CD4-positive, alpha-beta T cell (primary cell): ENCODE measurements at regions of chr5 and their contacts with region 1.

Region 1: GRCh38 chr5:181207214-181208107 is 2.5 kb upstream of the TRIM7 start:
- DNase-seq: peak; percentile 49 to 94 (median 62)
- ATAC-seq: peak; percentile 63
- H3K4me3 ChIP-seq: peak overlapping the region; percentile 59
- H3K4me3 Mint-ChIP-seq: peak overlapping the region; percentile 95
- H3K27ac ChIP-seq: peak overlapping the region; percentile 22 to 49
- H3K27ac Mint-ChIP-seq: peak overlapping the region; percentile 99
- H3K4me1 ChIP-seq: peaks cover 39% of the 10 kb centered on the region
- H3K4me1 Mint-ChIP-seq: peaks cover 41% of the 10 kb centered on the region
- H3K27me3 ChIP-seq: peaks cover 0 to 9% of the 10 kb centered on the region in 2 experiments
- H3K27me3 Mint-ChIP-seq: peaks cover 29% of the 10 kb centered on the region
- CTCF ChIP-seq: no peak

Region 2: GRCh38 chr5:181173420-181174342 is 33.8 kb before region 1 on chr5:
- CTCF ChIA-PET with region 1: interaction called, 5 read pairs
- POLR2A ChIA-PET with region 1: interaction called, 15 read pairs
- intact Hi-C with region 1: loop called in 1 of 2 experiments (anchors 10 kb)
- DNase-seq: peak in 9 of 14 experiments; percentile 17 to 76 (median 55)
- ATAC-seq: peak; percentile 84
- H3K4me3 ChIP-seq: peak overlapping the region; percentile 25
- H3K4me3 Mint-ChIP-seq: peak overlapping the region; percentile 92
- H3K27ac ChIP-seq: no peak overlapping the region
- H3K27ac Mint-ChIP-seq: peak overlapping the region; percentile 78
- H3K4me1 ChIP-seq: peaks cover 33% of the 10 kb centered on the region
- H3K4me1 Mint-ChIP-seq: peaks cover 44% of the 10 kb centered on the region
- H3K27me3 ChIP-seq: peaks cover 21 to 45% of the 10 kb centered on the region in 2 experiments
- H3K27me3 Mint-ChIP-seq: peaks cover 44% of the 10 kb centered on the region
- CTCF ChIP-seq: peak; percentile 10

Region 3: DNA sequence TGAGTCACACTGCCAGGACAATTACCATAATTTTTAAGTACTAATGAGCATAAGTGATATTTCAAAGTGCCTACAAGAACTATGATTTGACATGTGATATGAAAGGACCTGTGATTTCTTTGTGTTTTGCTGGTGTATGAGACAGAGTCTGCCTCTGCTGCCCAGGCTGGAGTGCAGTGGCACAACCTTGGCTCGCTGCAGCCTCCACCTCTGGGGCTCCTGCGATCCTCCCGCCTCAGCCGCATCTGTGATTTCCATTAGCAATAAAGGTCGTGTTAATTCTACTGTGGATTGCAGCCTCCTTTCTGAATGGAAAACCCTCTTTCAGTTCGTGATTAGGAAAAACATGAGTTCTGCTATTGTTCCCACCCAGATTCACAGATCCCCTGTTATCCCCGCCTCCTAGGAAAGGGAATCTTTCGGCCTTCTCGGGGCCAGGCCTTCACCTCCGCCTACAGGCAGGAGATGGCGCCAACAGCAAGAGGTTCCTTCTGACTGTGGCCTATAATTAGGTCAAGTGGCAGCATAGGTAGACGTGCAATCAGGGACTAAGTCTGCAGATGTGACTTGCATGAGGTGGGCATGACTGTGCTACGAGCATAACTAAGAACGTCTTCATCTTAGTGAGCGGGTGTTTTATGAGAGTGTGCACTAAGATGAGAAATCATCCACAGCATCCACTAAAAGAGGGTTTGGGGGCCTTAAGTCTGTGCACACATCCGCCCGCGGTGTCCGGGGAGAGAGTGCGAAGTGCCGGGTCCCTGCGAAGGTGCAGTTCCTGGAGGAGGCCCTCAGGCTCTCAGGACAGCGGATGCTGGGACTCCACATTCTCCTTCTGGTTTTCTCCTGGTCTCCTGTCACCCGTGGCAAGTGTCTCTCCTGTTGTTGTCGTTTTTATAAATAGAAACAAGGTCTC is 25.6 kb before region 1 on chr5:
- CTCF ChIA-PET with region 1: interaction called, 15 read pairs
- POLR2A ChIA-PET with region 1: interaction called, 292 read pairs
- intact Hi-C with region 1: no loop called
- DNase-seq: peak; percentile 46 to 88 (median 58)
- ATAC-seq: peak; percentile 59
- H3K4me3 ChIP-seq: no peak overlapping the region
- H3K4me3 Mint-ChIP-seq: peak overlapping the region; percentile 86
- H3K27ac ChIP-seq: no peak overlapping the region
- H3K27ac Mint-ChIP-seq: peak overlapping the region; percentile 86
- H3K4me1 ChIP-seq: peaks cover 30% of the 10 kb centered on the region
- H3K4me1 Mint-ChIP-seq: peaks cover 40% of the 10 kb centered on the region
- H3K27me3 ChIP-seq: no peaks in the 10 kb centered on the region
- H3K27me3 Mint-ChIP-seq: no peaks in the 10 kb centered on the region
- CTCF ChIP-seq: peak; percentile 87

Region 4: GRCh38 chr5:181191529-181192394 is 15.7 kb before region 1 on chr5:
- CTCF ChIA-PET with region 1: interaction called, 12 read pairs
- POLR2A ChIA-PET with region 1: interaction called, 292 read pairs
- intact Hi-C with region 1: loop called (anchors 1 kb)
- DNase-seq: peak; percentile 88 to 99 (median 96)
- ATAC-seq: peak; percentile 45
- H3K4me3 ChIP-seq: peak overlapping the region; percentile 89
- H3K4me3 Mint-ChIP-seq: peak overlapping the region; percentile 99
- H3K27ac ChIP-seq: peak overlapping the region; percentile 52 to 62
- H3K27ac Mint-ChIP-seq: peak overlapping the region; percentile 99
- H3K4me1 ChIP-seq: peaks cover 46% of the 10 kb centered on the region
- H3K4me1 Mint-ChIP-seq: peaks cover 47% of the 10 kb centered on the region
- H3K27me3 ChIP-seq: no peaks in the 10 kb centered on the region
- H3K27me3 Mint-ChIP-seq: peaks cover 35% of the 10 kb centered on the region
- CTCF ChIP-seq: no peak

Region 5: GRCh38 chr5:181223058-181223728 is 15.7 kb after region 1 on chr5 and contains the start of gene TRIM41:
- CTCF ChIA-PET with region 1: interaction called, 4 read pairs
- POLR2A ChIA-PET with region 1: interaction called, 86 read pairs
- intact Hi-C with region 1: loop called (anchors 1 kb)
- DNase-seq: peak; percentile 94 to 98 (median 97)
- ATAC-seq: peak; percentile 61
- H3K4me3 ChIP-seq: peak within 1 kb of the TSS; percentile 80
- H3K4me3 Mint-ChIP-seq: peak within 1 kb of the TSS; percentile 96
- H3K27ac ChIP-seq: peak within 1 kb of the TSS; percentile 97 to 99
- H3K27ac Mint-ChIP-seq: peak within 1 kb of the TSS; percentile 99
- H3K4me1 ChIP-seq: peaks cover 64% of the 10 kb centered on the region
- H3K4me1 Mint-ChIP-seq: peaks cover 51% of the 10 kb centered on the region
- H3K27me3 ChIP-seq: no peaks in the 10 kb centered on the region
- H3K27me3 Mint-ChIP-seq: peaks cover 23% of the 10 kb centered on the region
- CTCF ChIP-seq: no peak
- total RNA-seq, gene TRIM41: 21.4 to 24.0 TPM

Region 6: DNA sequence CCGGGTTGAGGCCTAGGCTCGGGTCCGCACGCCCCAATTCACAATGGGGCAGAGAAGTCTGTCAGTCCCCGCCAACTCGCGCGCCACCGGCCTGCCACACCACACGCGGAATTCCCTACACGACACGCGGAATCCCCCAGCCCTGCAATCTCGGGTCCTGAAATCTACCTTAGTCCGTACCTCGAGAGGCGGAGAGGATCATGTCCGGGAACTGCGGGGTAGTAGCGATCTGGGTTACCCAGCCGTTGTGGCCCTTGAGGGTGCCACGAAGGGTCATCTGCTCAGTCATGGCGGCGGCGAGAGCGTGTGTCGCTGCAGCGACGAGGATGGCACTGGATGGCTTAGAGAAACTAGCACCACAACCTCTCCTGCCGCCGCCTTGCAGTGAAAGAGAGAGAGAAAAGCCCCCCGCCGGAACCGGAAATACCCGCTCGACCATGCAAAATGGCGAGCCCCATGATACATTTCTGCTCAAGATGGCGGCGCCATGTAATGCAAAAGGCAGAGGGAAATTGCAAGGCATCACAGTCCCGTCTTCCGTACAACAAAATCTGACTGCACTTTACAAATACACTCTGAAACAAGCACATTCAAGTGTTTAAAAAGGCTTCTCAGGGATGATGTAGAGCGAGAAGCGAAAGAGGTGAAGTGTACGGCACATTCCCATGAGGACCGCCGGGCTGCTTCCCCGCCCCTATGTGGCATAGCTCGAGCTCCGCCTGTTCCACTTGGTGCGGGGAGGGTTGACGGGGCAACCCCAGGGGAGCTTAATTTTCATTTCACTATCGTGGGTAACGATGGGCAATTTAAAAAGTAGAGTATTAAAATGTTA is 36.3 kb after region 1 on chr5 and contains the start of gene RACK1:
- CTCF ChIA-PET with region 1: no interaction called
- POLR2A ChIA-PET with region 1: interaction called, 14 read pairs
- intact Hi-C with region 1: loop called in 1 of 2 experiments (anchors 5 kb)
- DNase-seq: peak; percentile 84 to 95 (median 88)
- ATAC-seq: peak; percentile 75
- H3K4me3 ChIP-seq: peak within 1 kb of the TSS; percentile 94
- H3K4me3 Mint-ChIP-seq: peak within 1 kb of the TSS; percentile 95
- H3K27ac ChIP-seq: peak within 1 kb of the TSS; percentile 81 to 90
- H3K27ac Mint-ChIP-seq: peak within 1 kb of the TSS; percentile 96
- H3K4me1 ChIP-seq: peaks cover 87% of the 10 kb centered on the region
- H3K4me1 Mint-ChIP-seq: peaks cover 76% of the 10 kb centered on the region
- H3K27me3 ChIP-seq: no peaks in the 10 kb centered on the region
- H3K27me3 Mint-ChIP-seq: no peaks in the 10 kb centered on the region
- CTCF ChIP-seq: no peak
- total RNA-seq, gene RACK1: 2,499 to 2,682 TPM

Region 7: DNA sequence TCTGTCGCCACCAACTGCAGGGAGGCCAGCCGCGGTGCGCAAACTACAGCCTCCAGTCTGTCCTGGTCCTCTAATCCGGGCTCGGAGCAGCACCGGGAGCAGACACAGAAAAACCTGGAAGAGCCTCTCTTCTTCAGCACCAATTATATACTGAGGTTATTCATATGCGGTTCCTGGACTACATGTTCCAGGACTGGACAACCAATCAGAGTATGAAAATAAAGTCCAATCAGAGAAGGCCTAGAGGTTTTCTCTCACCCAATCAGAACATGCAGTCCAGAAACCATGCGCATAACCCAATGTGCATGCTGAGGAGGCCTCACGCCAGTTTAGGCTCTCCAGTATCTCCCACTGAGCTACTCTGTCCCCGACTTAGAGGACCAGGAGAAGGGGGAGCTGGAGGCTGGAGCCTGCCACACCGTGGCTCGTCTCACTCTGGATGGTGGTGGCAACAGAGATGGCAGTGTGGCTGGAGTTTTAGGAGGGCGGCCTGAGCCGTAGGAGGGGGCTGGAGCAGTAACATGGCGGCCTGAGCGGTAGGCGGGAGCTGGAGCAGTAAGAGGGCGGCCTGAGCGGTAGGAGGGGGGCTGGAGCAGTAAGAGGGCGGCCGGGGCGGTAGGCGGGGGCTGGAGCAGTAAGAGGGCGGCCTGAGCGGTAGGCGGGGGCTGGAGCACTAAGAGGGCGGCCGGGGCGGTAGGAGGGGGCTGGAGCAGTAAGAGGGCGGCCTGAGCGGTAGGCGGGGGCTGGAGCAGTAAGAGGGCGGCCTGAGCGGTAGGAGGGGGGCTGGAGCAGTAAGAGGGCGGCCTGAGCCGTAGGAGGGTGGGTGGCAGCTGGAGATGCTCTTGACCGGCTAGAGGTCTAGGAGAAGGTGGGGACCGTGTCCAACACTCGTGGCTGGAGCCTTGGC is 73.9 kb after region 1 on chr5:
- CTCF ChIA-PET with region 1: no interaction called
- POLR2A ChIA-PET with region 1: no interaction called
- intact Hi-C with region 1: no loop called
- DNase-seq: no peak
- ATAC-seq: no peak
- H3K4me3 ChIP-seq: no peak overlapping the region
- H3K4me3 Mint-ChIP-seq: no peak overlapping the region
- H3K27ac ChIP-seq: no peak overlapping the region
- H3K27ac Mint-ChIP-seq: no peak overlapping the region
- H3K4me1 ChIP-seq: no peaks in the 10 kb centered on the region
- H3K4me1 Mint-ChIP-seq: no peaks in the 10 kb centered on the region
- H3K27me3 ChIP-seq: no peaks in the 10 kb centered on the region
- H3K27me3 Mint-ChIP-seq: no peaks in the 10 kb centered on the region
- CTCF ChIP-seq: no peak